ENCODE measurements at regions of chr6 and their contacts with region 1.

Region 1: DNA sequence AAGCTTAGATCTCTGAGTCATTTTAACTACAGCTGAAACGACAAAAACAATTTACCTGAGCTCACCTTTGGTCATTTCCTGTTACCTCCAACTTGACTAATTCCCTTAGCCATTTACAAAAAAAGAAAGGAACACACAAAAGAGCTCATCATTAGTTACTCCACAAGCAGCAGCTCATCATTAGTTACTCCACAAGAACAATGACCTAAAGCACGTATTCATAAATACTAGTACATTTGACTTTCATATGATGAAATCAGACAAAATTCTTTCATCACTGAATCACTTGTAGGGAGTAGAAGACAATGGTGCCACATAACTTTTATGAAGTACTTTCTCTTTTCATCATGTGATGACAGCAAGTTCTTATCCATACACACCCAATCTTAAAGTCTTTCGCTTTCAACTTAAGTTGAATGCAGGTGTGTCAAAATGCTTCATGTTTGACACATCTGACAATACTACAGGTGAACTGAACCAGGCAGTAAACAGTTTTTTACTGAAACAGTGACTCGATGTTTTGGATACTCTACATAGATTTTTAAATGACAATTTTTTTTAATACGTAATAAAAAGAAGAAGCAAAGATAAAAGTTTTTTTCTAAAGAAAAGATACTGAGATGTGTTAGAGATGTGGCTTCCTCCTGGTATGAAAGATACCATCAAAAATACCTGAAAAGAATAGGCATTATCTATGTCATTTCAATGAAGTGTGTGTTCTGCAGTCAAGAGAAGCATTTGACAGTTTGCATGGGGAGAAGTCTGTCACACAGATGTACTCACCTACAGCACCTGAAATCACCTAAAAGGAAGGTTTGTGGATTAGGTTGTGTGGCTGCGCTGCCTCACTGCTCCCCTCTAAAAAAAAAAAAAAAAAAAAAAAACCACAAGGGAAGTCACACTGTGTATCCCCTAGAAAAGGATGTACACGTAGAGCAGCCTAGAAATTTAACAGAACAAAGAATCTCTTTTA is 109.1 kb downstream of the PRDM1 start:
- DNase-seq: peak in 1 of 2 donors; percentile 76
- ATAC-seq: peak; percentile 72 to 82 (median 73)
- H3K4me3 ChIP-seq: peak overlapping the region; percentile 24
- H3K4me3 Mint-ChIP-seq: peak overlapping the region; percentile 81
- H3K27ac ChIP-seq: peak overlapping the region; percentile 94
- H3K27ac Mint-ChIP-seq: peak overlapping the region; percentile 92 to 95
- H3K4me1 ChIP-seq: peaks cover 20% of the 10 kb centered on the region
- H3K4me1 Mint-ChIP-seq: peaks cover 50 to 53% of the 10 kb centered on the region in 2 donors
- H3K27me3 ChIP-seq: no peaks in the 10 kb centered on the region
- H3K27me3 Mint-ChIP-seq: no peaks in the 10 kb centered on the region
- CTCF ChIP-seq: no peak

Region 2: GRCh38 chr6:105646391-105646867 is 548.8 kb before region 1 on chr6:
- intact Hi-C with region 1: loop called (anchors 2 kb)
- DNase-seq: peak in 1 of 2 donors; percentile 77
- ATAC-seq: peak; percentile 79 to 87 (median 83)
- H3K4me3 ChIP-seq: no peak overlapping the region
- H3K4me3 Mint-ChIP-seq: peak overlapping the region; percentile 54
- H3K27ac ChIP-seq: peak overlapping the region; percentile 77
- H3K27ac Mint-ChIP-seq: peak overlapping the region; percentile 88 to 95
- H3K4me1 ChIP-seq: peaks cover 46% of the 10 kb centered on the region
- H3K4me1 Mint-ChIP-seq: peaks cover 66 to 75% of the 10 kb centered on the region in 2 donors
- H3K27me3 ChIP-seq: no peaks in the 10 kb centered on the region
- H3K27me3 Mint-ChIP-seq: no peaks in the 10 kb centered on the region
- CTCF ChIP-seq: no peak

Region 3: GRCh38 chr6:105941621-105942412 is 253.4 kb before region 1 on chr6:
- intact Hi-C with region 1: no loop called
- DNase-seq: no peak
- ATAC-seq: no peak
- H3K4me3 ChIP-seq: no peak overlapping the region
- H3K4me3 Mint-ChIP-seq: no peak overlapping the region
- H3K27ac ChIP-seq: no peak overlapping the region
- H3K27ac Mint-ChIP-seq: no peak overlapping the region
- H3K4me1 ChIP-seq: no peaks in the 10 kb centered on the region
- H3K4me1 Mint-ChIP-seq: peaks cover 4 to 5% of the 10 kb centered on the region in 2 donors
- H3K27me3 ChIP-seq: peaks cover 2% of the 10 kb centered on the region
- H3K27me3 Mint-ChIP-seq: peaks cover 18 to 30% of the 10 kb centered on the region in 2 donors
- CTCF ChIP-seq: no peak

Region 4: GRCh38 chr6:105992315-105992961 is 202.8 kb before region 1 on chr6:
- intact Hi-C with region 1: loop called (anchors 5 kb)
- DNase-seq: peak; percentile 83 to 95
- ATAC-seq: peak; percentile 83 to 91 (median 90)
- H3K4me3 ChIP-seq: peak overlapping the region; percentile 88
- H3K4me3 Mint-ChIP-seq: peak overlapping the region; percentile 99
- H3K27ac ChIP-seq: peak overlapping the region; percentile 67
- H3K27ac Mint-ChIP-seq: peak overlapping the region; percentile 86 to 89
- H3K4me1 ChIP-seq: peaks cover 35% of the 10 kb centered on the region
- H3K4me1 Mint-ChIP-seq: peaks cover 33% of the 10 kb centered on the region in 2 donors
- H3K27me3 ChIP-seq: peaks cover 40% of the 10 kb centered on the region
- H3K27me3 Mint-ChIP-seq: peaks cover 53 to 66% of the 10 kb centered on the region in 2 donors
- CTCF ChIP-seq: no peak

Region 5: GRCh38 chr6:106026748-106027715 is 168.2 kb before region 1 on chr6:
- intact Hi-C with region 1: no loop called
- DNase-seq: no peak
- ATAC-seq: no peak
- H3K4me3 ChIP-seq: no peak overlapping the region
- H3K4me3 Mint-ChIP-seq: no peak overlapping the region
- H3K27ac ChIP-seq: no peak overlapping the region
- H3K27ac Mint-ChIP-seq: no peak overlapping the region
- H3K4me1 ChIP-seq: no peaks in the 10 kb centered on the region
- H3K4me1 Mint-ChIP-seq: peaks cover 0 to 14% of the 10 kb centered on the region in 2 donors
- H3K27me3 ChIP-seq: no peaks in the 10 kb centered on the region
- H3K27me3 Mint-ChIP-seq: peaks cover 21 to 45% of the 10 kb centered on the region in 2 donors
- CTCF ChIP-seq: no peak

Region 6: DNA sequence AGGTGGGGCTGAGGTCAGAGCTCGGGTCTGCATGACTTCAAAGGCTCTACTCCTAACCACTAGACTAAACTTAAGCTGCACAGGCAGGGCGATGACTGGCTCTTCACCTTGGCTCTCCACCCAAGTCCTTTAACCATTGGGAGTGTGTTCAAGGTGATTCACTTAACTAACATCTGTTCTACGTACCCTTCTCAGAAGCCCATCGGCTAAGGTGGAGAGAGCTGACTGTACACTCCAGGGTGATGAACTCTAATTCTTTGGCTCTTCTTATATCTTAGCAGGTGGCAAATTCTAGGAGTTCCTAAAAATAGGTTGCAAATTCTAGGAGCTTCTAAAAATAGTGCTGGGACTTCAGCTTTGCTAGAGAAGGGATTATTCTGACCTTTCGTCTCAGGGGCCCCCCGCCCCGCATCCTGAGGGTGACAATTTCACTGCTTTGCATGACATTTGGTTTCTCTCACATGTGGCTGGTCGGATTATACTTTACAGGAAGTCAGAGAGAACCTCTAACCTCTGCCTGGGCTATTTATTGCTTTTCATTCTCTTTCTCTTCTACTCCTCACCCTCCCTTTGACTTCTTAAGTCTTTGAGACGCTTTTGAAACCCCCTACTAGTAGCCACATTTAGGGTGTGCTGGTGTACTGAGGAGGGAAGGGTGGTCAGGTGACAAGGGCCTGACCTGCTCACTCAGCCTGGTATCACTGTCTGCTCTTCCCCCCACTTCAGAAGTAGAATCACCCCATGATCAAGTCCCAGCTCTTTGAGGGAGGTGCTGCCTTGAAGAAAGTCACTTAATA is 53.6 kb before region 1 on chr6:
- intact Hi-C with region 1: loop called (anchors 2 kb)
- DNase-seq: peak; percentile 38 to 56
- ATAC-seq: peak; percentile 71 to 84 (median 78)
- H3K4me3 ChIP-seq: no peak overlapping the region
- H3K4me3 Mint-ChIP-seq: peak overlapping the region; percentile 88
- H3K27ac ChIP-seq: peak overlapping the region; percentile 77
- H3K27ac Mint-ChIP-seq: peak overlapping the region; percentile 92 to 96
- H3K4me1 ChIP-seq: peaks cover 55% of the 10 kb centered on the region
- H3K4me1 Mint-ChIP-seq: peaks cover 59 to 72% of the 10 kb centered on the region in 2 donors
- H3K27me3 ChIP-seq: no peaks in the 10 kb centered on the region
- H3K27me3 Mint-ChIP-seq: no peaks in the 10 kb centered on the region
- CTCF ChIP-seq: no peak

Region 7: GRCh38 chr6:106149472-106150069 is 45.7 kb before region 1 on chr6:
- intact Hi-C with region 1: loop called (anchors 1 kb)
- DNase-seq: peak in 1 of 2 donors; percentile 64
- ATAC-seq: peak; percentile 62 to 92 (median 86)
- H3K4me3 ChIP-seq: no peak overlapping the region
- H3K4me3 Mint-ChIP-seq: no peak overlapping the region
- H3K27ac ChIP-seq: no peak overlapping the region
- H3K27ac Mint-ChIP-seq: peak overlapping the region; percentile 78 to 81
- H3K4me1 ChIP-seq: peaks cover 24% of the 10 kb centered on the region
- H3K4me1 Mint-ChIP-seq: peaks cover 36 to 42% of the 10 kb centered on the region in 2 donors
- H3K27me3 ChIP-seq: no peaks in the 10 kb centered on the region
- H3K27me3 Mint-ChIP-seq: no peaks in the 10 kb centered on the region
- CTCF ChIP-seq: no peak

Region 8: DNA sequence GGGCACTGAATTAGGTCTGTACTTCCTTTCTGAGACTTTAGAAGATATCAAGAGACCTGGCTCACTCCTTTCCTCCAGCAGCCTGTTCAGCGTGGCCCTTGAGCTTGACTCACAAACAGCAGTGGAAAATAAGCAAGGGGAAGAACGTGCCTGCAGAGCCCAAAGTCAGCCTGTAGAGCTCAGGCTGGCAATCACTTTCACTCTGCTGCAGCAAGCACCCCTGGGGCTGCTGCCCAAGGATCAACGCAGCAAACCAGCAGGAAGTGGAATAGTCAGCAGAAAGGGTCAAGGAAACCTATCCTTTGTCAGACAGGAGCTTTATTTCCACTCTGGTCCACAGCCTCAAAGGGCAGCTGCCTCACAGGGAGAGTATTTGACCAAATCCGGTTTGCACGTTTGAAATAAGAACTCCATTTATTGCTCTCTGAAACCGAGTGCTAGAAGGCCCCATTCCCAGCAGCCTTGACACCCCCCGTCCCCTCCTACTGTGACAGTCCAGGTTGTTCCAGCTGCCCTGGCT is 31.7 kb before region 1 on chr6:
- intact Hi-C with region 1: loop called (anchors 1 kb)
- DNase-seq: peak; percentile 48 to 72
- ATAC-seq: peak; percentile 45 to 63 (median 55)
- H3K4me3 ChIP-seq: no peak overlapping the region
- H3K4me3 Mint-ChIP-seq: peak overlapping the region; percentile 77
- H3K27ac ChIP-seq: peak overlapping the region; percentile 90
- H3K27ac Mint-ChIP-seq: peak overlapping the region; percentile 94 to 98
- H3K4me1 ChIP-seq: peaks cover 34% of the 10 kb centered on the region
- H3K4me1 Mint-ChIP-seq: peaks cover 63 to 65% of the 10 kb centered on the region in 2 donors
- H3K27me3 ChIP-seq: no peaks in the 10 kb centered on the region
- H3K27me3 Mint-ChIP-seq: no peaks in the 10 kb centered on the region
- CTCF ChIP-seq: no peak